HCT116 (cell line): ENCODE measurements at regions of chr1 and their contacts with region 1.

Region 1: GRCh38 chr1:53326088-53326597 is 1.7 kb downstream of the LRP8 start:
- DNase-seq: peak; percentile 85
- ATAC-seq: peak; percentile 89
- H3K4me3 ChIP-seq: peak overlapping the region; percentile 87 to 97
- H3K27ac ChIP-seq: peak overlapping the region; percentile 88
- H3K4me1 ChIP-seq: peaks cover 8 to 21% of the 10 kb centered on the region in 2 experiments
- H3K27me3 ChIP-seq: no peaks in the 10 kb centered on the region
- CTCF ChIP-seq: no peak
- POLR2A ChIP-seq: no peak
- RAD21 ChIP-seq: no peak

Region 2: DNA sequence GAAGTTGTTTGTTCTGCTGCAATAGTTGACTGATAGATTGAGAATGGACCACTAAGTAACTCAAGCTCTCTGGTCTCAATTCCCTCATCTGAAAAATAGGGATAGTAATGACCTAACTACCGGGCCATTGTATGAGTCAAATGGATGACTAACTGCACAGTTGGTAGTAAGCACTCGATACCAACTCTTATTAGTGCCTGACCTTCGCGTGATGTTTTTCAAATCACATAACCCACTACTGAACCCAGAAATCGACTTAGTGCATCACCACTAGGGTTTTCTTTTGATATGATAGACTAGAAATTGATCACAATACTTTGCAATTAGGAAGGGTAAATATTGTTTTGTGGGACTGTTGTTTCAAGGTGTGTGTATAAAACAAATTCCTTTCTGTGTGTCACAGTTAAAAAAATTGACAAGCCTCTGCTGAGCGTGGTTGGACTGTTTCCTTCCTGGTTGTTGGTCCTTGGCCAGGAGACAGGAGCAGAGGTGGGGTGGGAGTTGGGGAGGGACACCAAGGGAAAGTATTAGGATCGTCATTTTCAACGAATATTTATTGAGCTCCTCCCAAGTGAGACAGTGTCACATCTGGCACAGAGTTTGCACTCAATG is 55.8 kb after region 1 on chr1:
- CTCF ChIA-PET with region 1: no interaction called
- POLR2A ChIA-PET with region 1: no interaction called
- RAD21 ChIA-PET with region 1: no interaction called
- intact Hi-C with region 1: loop called (anchors 5 kb)
- DNase-seq: peak; percentile 33
- ATAC-seq: peak; percentile 82
- H3K4me3 ChIP-seq: peak overlapping the region in 1 of 2 experiments; percentile 39; a peak in 3 of 4 replicates
- H3K27ac ChIP-seq: no peak overlapping the region
- H3K4me1 ChIP-seq: peaks cover 6 to 24% of the 10 kb centered on the region in 2 experiments; a peak in 3 of 4 replicates
- H3K27me3 ChIP-seq: no peaks in the 10 kb centered on the region
- CTCF ChIP-seq: no peak
- POLR2A ChIP-seq: no peak
- RAD21 ChIP-seq: no peak

Region 3: GRCh38 chr1:53413175-53414001 is 87.2 kb after region 1 on chr1:
- CTCF ChIA-PET with region 1: no interaction called
- POLR2A ChIA-PET with region 1: no interaction called
- RAD21 ChIA-PET with region 1: no interaction called
- intact Hi-C with region 1: no loop called
- DNase-seq: peak; percentile 85
- ATAC-seq: peak; percentile 92
- H3K4me3 ChIP-seq: peak overlapping the region in 1 of 2 experiments; percentile 31; a peak in 2 of 4 replicates
- H3K27ac ChIP-seq: peak overlapping the region; percentile 90
- H3K4me1 ChIP-seq: peaks cover 33 to 73% of the 10 kb centered on the region in 2 experiments
- H3K27me3 ChIP-seq: no peaks in the 10 kb centered on the region
- CTCF ChIP-seq: no peak
- POLR2A ChIP-seq: no peak
- RAD21 ChIP-seq: no peak